OCI-LY7 (cell line): ENCODE measurements at regions of chr17 and their contacts with region 1.

Region 1: DNA sequence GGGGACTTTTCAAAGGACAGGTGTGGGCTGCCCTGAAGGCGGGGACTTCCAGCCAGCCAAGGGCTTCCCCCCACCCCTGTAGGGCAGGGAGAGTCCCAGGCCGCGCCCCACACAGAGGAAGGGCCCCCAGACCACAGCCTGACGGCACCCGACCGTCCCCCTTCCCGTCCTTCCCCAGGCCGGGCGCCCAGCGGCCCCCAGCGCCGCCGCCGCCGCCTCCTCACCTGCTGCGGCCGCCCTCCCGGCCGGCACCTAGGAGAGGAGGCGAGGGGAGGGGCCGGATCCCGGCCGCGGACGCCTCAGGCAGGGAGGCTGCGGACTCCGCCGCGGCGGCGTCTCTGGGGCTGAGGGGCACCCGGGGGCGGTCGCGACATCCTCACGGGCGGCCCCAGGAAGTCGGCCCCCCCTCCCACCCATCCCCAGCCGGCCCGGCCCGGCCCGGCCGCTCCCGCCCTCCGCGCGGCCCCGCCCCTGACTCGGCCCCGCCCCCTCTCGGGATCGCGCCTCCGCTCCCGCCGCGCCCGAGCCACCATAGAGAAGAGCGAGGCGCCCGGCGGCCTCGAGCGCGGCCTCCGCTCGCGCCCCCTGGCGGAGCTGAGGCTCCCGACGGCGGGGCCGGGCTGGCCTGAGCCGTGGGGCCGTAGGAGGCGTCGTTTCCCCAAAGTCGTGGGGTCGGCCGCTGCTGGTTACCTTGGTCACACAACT is 25.5 kb upstream of the RFFL start:
- DNase-seq: peak; percentile 91
- H3K4me3 ChIP-seq: peak overlapping the region; percentile 85
- H3K27ac ChIP-seq: peak overlapping the region; percentile 34
- H3K4me1 ChIP-seq: peaks cover 27% of the 10 kb centered on the region
- CTCF ChIP-seq: peak; percentile 74

Region 2: DNA sequence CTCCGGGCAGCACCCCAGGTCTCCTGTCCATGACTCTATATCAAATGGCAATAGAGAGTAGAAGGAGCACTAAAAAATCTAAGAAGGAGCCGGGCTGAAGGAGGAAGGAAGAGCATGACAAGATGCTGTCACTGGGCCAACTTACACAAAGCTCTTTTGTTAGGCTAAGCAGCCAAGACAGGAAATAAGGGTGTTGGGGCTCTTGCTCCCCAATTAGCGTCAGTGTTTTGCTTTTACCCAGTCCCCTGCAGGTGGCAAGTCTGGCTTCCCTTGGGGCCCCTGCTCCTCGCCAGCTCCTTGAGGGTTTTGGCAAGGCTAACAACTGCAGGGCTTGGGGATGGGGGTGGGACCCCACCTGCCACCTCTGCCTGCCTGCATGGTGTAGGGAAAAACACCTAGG is 248.3 kb before region 1 on chr17:
- CTCF ChIA-PET with region 1: no interaction called
- POLR2A ChIA-PET with region 1: no interaction called
- intact Hi-C with region 1: no loop called
- DNase-seq: peak; percentile 89
- H3K4me3 ChIP-seq: peak overlapping the region; percentile 39
- H3K27ac ChIP-seq: peak overlapping the region; percentile 84
- H3K4me1 ChIP-seq: peaks cover 66% of the 10 kb centered on the region
- CTCF ChIP-seq: no peak

Region 3: GRCh38 chr17:34980681-34981537 is 108.1 kb before region 1 on chr17:
- CTCF ChIA-PET with region 1: no interaction called
- POLR2A ChIA-PET with region 1: interaction called, 3 read pairs
- intact Hi-C with region 1: loop called (anchors 2 kb)
- DNase-seq: peak; percentile 84
- H3K4me3 ChIP-seq: peak overlapping the region; percentile 92
- H3K27ac ChIP-seq: peak overlapping the region; percentile 82
- H3K4me1 ChIP-seq: peaks cover 16% of the 10 kb centered on the region
- CTCF ChIP-seq: peak; percentile 63

Region 4: DNA sequence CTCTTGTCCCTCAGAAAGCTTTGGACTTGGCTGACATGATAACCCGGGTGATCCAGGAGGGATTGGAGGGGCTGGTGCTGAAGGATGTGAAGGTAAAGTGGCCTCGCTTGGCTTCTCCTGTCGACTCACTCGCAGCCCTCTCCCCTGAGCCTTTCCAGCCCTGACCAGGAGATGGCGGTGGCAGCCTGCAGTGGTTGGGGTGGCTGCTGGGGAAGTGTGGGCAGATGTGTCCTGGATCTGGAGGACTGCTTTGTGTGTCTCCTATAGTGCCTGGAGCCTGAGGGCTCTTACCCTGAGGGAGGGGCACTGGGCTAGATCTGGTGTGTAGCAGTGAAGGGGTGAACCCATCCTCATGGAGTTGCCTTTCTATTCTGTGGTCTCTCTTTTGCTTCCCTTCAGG is 90.8 kb before region 1 on chr17:
- CTCF ChIA-PET with region 1: no interaction called
- POLR2A ChIA-PET with region 1: no interaction called
- intact Hi-C with region 1: loop called (anchors 2 kb)
- DNase-seq: peak; percentile 63
- H3K4me3 ChIP-seq: no peak overlapping the region
- H3K27ac ChIP-seq: no peak overlapping the region
- H3K4me1 ChIP-seq: no peaks in the 10 kb centered on the region
- CTCF ChIP-seq: peak; percentile 81

Region 5: GRCh38 chr17:35011671-35012210 is 77.3 kb before region 1 on chr17:
- CTCF ChIA-PET with region 1: no interaction called
- POLR2A ChIA-PET with region 1: no interaction called
- intact Hi-C with region 1: loop called (anchors 5 kb)
- DNase-seq: no peak
- H3K4me3 ChIP-seq: no peak overlapping the region
- H3K27ac ChIP-seq: no peak overlapping the region
- H3K4me1 ChIP-seq: no peaks in the 10 kb centered on the region
- CTCF ChIP-seq: no peak

Region 6: GRCh38 chr17:35028531-35029262 is 60.3 kb before region 1 on chr17:
- CTCF ChIA-PET with region 1: no interaction called
- POLR2A ChIA-PET with region 1: no interaction called
- intact Hi-C with region 1: no loop called
- DNase-seq: no peak
- H3K4me3 ChIP-seq: no peak overlapping the region
- H3K27ac ChIP-seq: no peak overlapping the region
- H3K4me1 ChIP-seq: no peaks in the 10 kb centered on the region
- CTCF ChIP-seq: no peak

Region 7: GRCh38 chr17:35141681-35142466 is 52.8 kb after region 1 on chr17 and contains the start of gene NLE1:
- CTCF ChIA-PET with region 1: no interaction called
- POLR2A ChIA-PET with region 1: no interaction called
- intact Hi-C with region 1: loop called (anchors 1 kb)
- DNase-seq: peak; percentile 86
- H3K4me3 ChIP-seq: peak within 1 kb of the TSS; percentile 99
- H3K27ac ChIP-seq: peak within 1 kb of the TSS; percentile 19
- H3K4me1 ChIP-seq: peaks cover 16% of the 10 kb centered on the region
- CTCF ChIP-seq: peak; percentile 81
- total RNA-seq, gene NLE1: 30.3 and 32.2 TPM in 2 replicates